Activated CD4-positive, alpha-beta memory T cell treated with anti-CD3 and anti-CD28 coated beads for 36 hours (primary cell): ENCODE measurements at regions of chr5 and their contacts with region 1.

Region 1: GRCh38 chr5:97231025-97231636 is 48.1 kb upstream of the RIOK2 start:
- DNase-seq: peak; percentile 14
- H3K4me3 Mint-ChIP-seq: no peak overlapping the region
- H3K27ac Mint-ChIP-seq: no peak overlapping the region
- H3K4me1 Mint-ChIP-seq: no peaks in the 10 kb centered on the region
- H3K27me3 Mint-ChIP-seq: peaks cover 4% of the 10 kb centered on the region

Region 2: DNA sequence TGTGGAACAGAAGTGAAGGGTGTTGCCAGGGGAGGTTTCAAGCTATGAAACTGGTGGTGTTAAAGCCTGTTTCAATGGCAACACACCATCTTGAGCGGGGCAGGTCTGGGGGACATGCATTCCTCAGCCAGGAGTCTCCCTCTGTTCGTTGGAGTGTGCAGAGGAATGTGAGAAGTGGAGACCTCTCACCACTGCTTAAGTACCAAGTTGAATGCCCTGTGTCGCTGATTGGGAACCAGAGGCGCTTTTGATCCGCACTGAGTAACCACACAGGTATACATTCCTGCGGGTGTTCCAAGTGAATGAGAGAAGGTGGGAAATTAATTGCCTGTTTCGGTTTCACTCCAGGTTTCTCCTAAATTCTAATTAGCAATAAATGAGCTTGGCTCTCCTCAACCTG is 188.1 kb before region 1 on chr5:
- CTCF ChIA-PET with region 1: no interaction called
- POLR2A ChIA-PET with region 1: no interaction called
- intact Hi-C with region 1: no loop called
- DNase-seq: no peak
- H3K4me3 Mint-ChIP-seq: no peak overlapping the region
- H3K27ac Mint-ChIP-seq: no peak overlapping the region
- H3K4me1 Mint-ChIP-seq: no peaks in the 10 kb centered on the region
- H3K27me3 Mint-ChIP-seq: no peaks in the 10 kb centered on the region

Region 3: DNA sequence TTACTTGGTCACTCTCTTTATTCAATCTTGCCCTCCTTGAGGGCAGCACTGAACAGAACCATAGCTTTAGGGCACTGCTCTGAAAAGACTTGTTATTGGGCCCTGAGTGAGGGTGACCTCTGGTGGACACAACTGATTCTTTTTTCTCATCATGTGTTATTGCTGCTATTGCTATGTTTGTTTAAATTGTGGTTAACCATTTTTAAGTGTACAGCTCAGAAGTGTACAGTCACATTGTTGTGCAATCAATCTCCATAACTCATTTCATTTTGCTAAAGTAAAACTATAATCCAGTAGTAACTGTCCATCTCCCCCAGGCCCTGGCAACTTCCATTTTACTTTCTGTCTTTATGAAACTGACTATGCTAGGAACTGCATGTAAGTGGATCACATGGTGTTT is 303.0 kb after region 1 on chr5:
- CTCF ChIA-PET with region 1: interaction called, 18 read pairs
- POLR2A ChIA-PET with region 1: no interaction called
- intact Hi-C with region 1: loop called (anchors 1 kb)
- DNase-seq: no peak
- H3K4me3 Mint-ChIP-seq: no peak overlapping the region
- H3K27ac Mint-ChIP-seq: no peak overlapping the region
- H3K4me1 Mint-ChIP-seq: no peaks in the 10 kb centered on the region
- H3K27me3 Mint-ChIP-seq: no peaks in the 10 kb centered on the region

Region 4: DNA sequence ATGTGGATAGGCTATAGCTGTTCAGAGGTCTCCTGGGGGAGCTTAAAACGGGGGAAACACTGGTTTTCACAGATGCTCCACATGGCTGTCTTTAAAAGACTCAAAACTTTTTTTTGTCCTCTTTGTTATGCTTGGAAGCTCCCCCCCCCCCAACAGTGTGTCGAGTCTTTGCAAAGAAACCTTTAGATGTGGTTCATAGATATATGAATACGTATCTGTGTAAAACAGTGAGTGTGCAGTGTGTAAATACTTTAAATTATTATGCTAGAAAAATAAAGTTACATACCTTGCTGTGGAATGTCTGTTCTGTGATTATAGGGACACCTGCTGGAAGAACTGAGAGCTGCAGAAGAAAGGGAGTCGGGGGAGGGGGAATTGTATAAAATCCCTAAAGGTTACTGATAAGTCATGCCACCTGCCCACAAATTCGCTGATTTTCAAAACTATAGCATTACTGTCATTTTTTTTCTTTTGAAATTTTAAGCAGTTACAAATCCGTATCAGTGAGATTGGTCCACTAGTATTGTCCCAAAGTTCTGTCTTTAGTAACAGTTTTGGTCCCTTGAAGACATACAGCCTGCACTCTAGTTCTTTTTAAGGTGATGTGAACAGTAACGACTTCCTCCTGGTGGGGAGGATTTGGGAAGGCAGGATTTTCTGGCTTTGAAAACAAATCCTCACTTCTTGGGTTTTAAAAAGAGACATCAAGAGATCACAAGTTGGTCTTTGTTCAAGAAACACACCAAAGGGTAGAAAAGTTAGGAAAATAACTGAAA is 1565.3 kb after region 1 on chr5:
- CTCF ChIA-PET with region 1: interaction called, 17 read pairs
- POLR2A ChIA-PET with region 1: no interaction called
- intact Hi-C with region 1: loop called (anchors 1 kb)
- DNase-seq: peak; percentile 67
- H3K4me3 Mint-ChIP-seq: no peak overlapping the region
- H3K27ac Mint-ChIP-seq: no peak overlapping the region
- H3K4me1 Mint-ChIP-seq: peaks cover 4% of the 10 kb centered on the region
- H3K27me3 Mint-ChIP-seq: no peaks in the 10 kb centered on the region